ENCODE measurements at regions of chr1 and their contacts with region 1.

Region 1: DNA sequence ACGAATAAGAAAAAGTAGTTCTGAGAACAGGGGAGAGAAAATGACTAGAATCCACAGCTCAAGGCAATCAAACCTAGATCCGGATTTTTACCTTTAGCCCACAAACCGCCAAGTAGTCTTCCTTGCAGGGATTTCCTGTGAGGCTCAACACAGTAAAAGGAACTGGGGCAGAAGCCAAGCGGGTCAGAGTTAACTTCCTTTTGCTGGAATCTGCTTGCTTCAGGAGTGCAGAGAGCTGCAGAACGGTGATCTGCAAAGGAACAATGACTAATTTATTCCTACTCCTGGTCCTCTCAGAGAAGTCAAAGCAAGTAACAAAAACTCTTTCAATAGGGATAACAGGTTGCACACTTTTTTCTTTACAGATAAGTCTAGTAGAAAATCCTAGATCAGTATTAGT is 53.4 kb downstream of the UBR4 start:
- DNase-seq: no peak
- ATAC-seq: peak in 1 of 2 donors; percentile 56
- H3K4me3 ChIP-seq: no peak overlapping the region
- H3K27ac ChIP-seq: peak overlapping the region in 2 of 4 donors; percentile 14 to 37
- H3K4me1 ChIP-seq: peaks cover 3 to 8% of the 10 kb centered on the region in 2 donors
- H3K27me3 ChIP-seq: no peaks in the 10 kb centered on the region
- CTCF ChIP-seq: no peak
- POLR2A ChIP-seq: no peak

Region 2: DNA sequence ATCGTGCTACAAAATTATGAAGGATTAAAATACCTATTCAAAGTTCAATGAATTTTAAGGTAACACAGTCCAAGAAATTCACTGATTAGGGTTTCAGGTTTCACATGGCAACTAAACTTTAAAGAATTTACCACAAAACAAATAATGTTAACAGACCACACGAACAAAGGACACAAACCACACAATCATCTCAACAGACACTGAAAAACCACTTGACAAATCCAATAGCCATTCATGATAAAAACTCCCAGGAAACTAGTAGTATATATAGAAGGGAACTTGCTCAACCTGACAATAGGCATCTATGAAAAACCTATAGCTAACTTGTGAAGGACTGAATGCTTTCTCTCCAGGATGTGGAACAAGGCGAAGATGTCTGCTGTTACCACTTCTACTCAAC is 1596.9 kb after region 1 on chr1:
- in situ Hi-C with region 1: loop called in 1 of 4 experiments (anchors 25 kb)
- intact Hi-C with region 1: no loop called
- DNase-seq: no peak
- ATAC-seq: no peak
- H3K4me3 ChIP-seq: no peak overlapping the region
- H3K27ac ChIP-seq: no peak overlapping the region
- H3K4me1 ChIP-seq: peaks cover 0 to 5% of the 10 kb centered on the region in 2 donors
- H3K27me3 ChIP-seq: no peaks in the 10 kb centered on the region
- CTCF ChIP-seq: no peak
- POLR2A ChIP-seq: no peak

Measured in gastrocnemius medialis (tissue), 4 donors.